IMR-90 (cell line): ENCODE measurements at regions of chr10 and their contacts with region 1.

Region 1: DNA sequence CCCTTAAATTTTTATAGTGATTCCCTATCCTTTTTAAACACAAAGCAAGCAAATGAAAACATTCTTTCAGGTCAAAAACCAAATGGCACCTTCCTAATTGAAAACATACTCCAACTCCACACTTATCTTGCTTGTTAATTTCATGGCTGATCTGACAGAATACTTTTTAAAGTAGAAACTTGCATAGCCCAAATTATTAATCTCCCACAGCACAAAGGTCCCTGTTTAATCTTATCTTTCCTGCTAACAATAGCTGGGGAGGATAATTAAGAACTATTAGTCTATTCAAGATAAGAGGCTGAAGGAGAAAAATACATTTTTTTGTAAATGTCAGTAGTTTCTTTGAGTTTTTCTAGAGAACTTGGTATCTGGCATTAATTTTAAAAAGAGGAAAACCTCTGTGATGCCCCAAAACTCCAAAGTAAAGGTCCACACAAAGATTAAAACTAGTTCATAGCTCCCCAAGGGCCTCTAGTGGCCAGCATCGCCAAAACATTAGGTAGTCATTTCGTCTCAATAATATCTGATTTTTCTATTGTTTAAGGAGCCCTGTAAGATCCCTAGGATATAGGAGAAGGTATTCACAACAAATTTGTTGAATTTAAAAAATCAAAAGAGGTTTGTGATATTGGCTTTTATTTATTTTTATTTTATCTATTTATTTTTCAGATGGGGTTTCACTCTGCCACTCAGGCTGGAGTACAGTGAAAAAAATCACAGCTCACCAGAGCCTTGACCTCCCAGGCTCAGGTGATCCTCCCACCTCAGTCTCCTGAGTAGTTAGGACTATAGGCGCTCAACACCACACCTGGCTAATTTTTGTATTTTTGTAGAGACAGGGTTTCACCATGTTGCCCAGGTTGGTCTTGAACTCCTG is 14.7 kb downstream of the CDNF start:
- DNase-seq: peak; percentile 59
- ATAC-seq: peak; percentile 73
- H3K4me3 ChIP-seq: no peak overlapping the region
- H3K27ac ChIP-seq: no peak overlapping the region
- H3K4me1 ChIP-seq: peaks cover 3% of the 10 kb centered on the region
- H3K27me3 ChIP-seq: peaks cover 2% of the 10 kb centered on the region
- CTCF ChIP-seq: peak; percentile 86
- POLR2A ChIP-seq: no peak
- RAD21 ChIP-seq: peak; percentile 90

Region 2: DNA sequence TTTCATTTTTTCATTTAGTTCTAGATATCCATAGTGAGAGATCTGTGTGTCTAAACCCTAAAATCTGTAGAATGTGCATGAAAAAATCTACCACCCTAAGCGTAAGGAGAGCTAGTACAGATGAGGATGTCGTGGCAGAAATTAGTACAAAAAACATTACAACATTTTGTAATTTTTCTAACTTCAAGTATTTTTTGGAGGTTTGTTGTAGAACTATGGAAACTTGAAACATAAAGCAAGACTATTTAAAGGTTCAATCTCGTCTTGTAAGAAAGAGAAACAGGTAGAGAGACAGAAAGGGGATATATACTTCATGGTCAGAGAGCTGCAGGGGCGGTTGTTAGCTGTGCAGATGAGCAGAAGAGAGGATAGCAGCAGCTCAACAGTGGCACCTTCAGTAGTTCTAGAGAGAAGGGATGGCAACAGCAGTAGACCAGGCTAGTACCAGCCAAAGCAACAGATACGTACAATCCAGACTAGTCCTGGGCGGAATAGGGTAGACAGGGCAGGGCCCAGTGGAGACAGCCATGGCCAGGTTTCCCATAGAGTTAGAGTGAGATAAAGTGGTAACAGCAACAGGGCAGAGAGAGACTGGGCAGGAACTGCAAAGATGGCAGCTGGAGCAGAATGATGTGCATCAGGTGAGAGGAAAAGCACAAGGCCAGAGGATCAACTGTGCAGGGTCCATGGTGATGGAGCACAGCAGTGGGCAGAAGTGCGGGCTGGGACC is 637.6 kb before region 1 on chr10:
- CTCF ChIA-PET with region 1: no interaction called
- POLR2A ChIA-PET with region 1: no interaction called
- dilution Hi-C with region 1: no loop called
- in situ Hi-C with region 1: loop called (anchors 25 kb)
- intact Hi-C with region 1: loop called (anchors 10 kb)
- DNase-seq: peak; percentile 90
- ATAC-seq: peak; percentile 92
- H3K4me3 ChIP-seq: no peak overlapping the region
- H3K27ac ChIP-seq: no peak overlapping the region
- H3K4me1 ChIP-seq: peaks cover 2% of the 10 kb centered on the region; the same call in 1 of the 2 replicates
- H3K27me3 ChIP-seq: peaks cover 32% of the 10 kb centered on the region
- CTCF ChIP-seq: no peak
- POLR2A ChIP-seq: peak; percentile 99
- RAD21 ChIP-seq: no peak

Region 3: DNA sequence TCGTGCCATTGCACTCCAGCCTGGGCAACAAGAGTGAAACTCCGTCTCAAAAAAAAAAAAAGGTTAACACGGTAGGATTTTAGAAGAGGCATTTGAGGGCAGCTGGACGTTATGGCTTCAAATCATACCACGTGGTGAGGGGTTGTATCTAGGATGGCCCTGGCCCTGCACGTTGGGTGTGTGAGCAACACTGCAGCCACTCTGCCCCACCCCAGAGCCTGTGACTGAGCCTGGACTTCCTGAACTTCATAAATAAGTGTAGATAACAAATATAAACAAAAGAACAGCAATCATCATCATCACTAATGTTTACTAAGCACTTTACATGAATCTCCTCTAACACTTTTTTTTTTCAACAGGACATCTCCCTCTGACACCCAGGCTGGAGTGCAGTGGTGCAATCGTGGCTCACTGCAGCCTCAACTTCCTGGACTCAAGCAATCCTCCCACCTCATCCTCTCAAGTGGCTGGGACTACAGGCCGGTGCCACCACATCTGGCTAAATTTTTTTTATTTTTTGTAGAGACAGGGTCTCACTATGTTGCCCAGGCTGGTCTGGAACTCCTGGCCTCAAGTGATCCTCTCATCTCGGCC is 322.8 kb before region 1 on chr10:
- CTCF ChIA-PET with region 1: interaction called, 4 read pairs
- POLR2A ChIA-PET with region 1: no interaction called
- dilution Hi-C with region 1: no loop called
- in situ Hi-C with region 1: loop called (anchors 5 kb)
- intact Hi-C with region 1: loop called (anchors 1 kb)
- DNase-seq: no peak
- ATAC-seq: no peak
- H3K4me3 ChIP-seq: no peak overlapping the region
- H3K27ac ChIP-seq: no peak overlapping the region
- H3K4me1 ChIP-seq: peaks cover 7% of the 10 kb centered on the region; the same call in 1 of the 2 replicates
- H3K27me3 ChIP-seq: no peaks in the 10 kb centered on the region
- CTCF ChIP-seq: no peak
- POLR2A ChIP-seq: no peak
- RAD21 ChIP-seq: no peak

Region 4: DNA sequence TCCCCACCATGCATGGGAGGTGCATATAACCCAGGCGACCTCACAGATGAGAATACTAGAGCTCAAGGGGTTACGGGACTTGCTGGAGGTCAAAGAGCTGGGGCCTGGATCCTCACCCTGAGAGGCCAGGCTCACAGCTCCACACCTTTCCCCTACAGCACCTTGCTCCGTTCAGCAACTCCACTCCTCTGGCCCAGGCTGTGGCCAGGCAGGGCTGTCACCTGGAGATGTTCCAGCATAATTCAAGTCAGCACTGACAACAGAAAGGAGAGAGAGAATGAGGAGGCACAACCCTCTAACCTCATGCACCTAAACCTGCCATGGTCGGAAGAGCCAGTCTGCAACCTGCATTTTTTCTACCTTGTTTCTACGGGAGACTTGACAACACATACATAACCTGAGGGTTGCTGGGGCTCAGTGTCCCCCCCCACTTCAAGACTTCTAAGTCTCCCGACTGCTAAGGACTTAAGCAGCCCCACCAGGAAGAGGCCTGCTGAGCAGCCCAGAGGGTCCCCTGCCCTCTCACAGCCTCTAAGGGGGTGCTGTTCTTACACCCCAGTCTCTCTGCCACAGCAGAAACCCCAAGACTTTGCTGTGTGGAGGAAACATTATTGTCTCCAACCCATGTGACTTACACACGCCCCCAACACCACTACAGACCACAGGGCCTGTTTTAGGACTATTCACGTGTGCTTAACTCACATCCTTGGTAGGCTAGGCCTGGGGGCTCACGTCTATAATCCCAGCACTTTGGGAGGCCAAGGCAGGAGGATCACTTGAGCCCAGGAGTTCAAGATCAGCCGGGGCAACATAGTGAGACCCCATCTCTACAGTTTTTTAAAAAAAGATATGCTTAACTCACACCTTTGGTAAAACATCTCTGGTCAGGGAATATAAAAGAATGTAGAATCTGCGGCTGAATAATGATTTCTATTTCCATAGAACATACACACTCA is 224.0 kb before region 1 on chr10:
- CTCF ChIA-PET with region 1: interaction called, 6 read pairs
- POLR2A ChIA-PET with region 1: no interaction called
- dilution Hi-C with region 1: no loop called
- in situ Hi-C with region 1: loop called (anchors 10 kb)
- intact Hi-C with region 1: loop called (anchors 1 kb)
- DNase-seq: no peak
- ATAC-seq: no peak
- H3K4me3 ChIP-seq: no peak overlapping the region
- H3K27ac ChIP-seq: no peak overlapping the region
- H3K4me1 ChIP-seq: peaks cover 10% of the 10 kb centered on the region
- H3K27me3 ChIP-seq: no peaks in the 10 kb centered on the region
- CTCF ChIP-seq: no peak
- POLR2A ChIP-seq: no peak
- RAD21 ChIP-seq: no peak

Region 5: GRCh38 chr10:14659626-14660196 is 163.4 kb before region 1 on chr10:
- CTCF ChIA-PET with region 1: no interaction called
- POLR2A ChIA-PET with region 1: no interaction called
- dilution Hi-C with region 1: no loop called
- in situ Hi-C with region 1: no loop called
- intact Hi-C with region 1: loop called (anchors 5 kb)
- DNase-seq: no peak
- ATAC-seq: no peak
- H3K4me3 ChIP-seq: no peak overlapping the region
- H3K27ac ChIP-seq: no peak overlapping the region
- H3K4me1 ChIP-seq: peaks cover 6% of the 10 kb centered on the region
- H3K27me3 ChIP-seq: peaks cover 8% of the 10 kb centered on the region
- CTCF ChIP-seq: no peak
- POLR2A ChIP-seq: no peak
- RAD21 ChIP-seq: no peak